Kidney (tissue), 22 donors: ENCODE measurements at regions of chr17 and their contacts with region 1.

Region 1: DNA sequence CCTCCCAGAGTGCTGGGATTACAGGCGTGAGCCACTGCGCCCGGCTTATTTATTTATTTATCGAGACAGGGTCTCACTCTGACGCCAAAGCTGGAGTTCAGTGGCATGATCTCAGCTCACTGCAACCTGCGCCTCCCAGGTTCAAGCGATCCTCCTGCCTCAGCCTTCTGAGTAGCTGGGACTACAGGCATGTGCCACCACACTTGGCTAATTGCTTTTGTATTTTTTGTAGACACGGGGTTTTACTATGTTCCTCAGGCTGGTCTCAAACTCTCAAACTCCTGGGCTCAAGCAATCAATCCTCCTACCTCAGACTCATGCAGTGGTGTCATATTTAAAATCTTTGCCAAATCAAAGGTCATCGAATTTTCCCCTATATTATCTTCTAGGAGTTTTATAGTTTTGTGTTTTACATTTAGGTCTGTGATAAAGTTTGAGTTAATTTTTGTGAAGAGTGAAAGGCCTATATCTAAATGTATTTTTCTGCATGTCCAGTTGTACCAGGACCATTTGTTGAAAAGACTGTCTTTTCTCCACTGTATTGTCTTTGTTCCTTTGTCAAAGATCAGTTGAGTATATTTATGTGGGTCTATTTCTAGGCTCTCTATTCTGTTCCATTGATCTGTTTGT is 47.1 kb downstream of the NACA2 start:
- DNase-seq: no peak
- H3K4me3 ChIP-seq: no peak overlapping the region
- H3K27ac ChIP-seq: no peak overlapping the region
- H3K4me1 ChIP-seq: no peaks in the 10 kb centered on the region
- H3K27me3 ChIP-seq: no peaks in the 10 kb centered on the region
- CTCF ChIP-seq: no peak

Region 2: GRCh38 chr17:61426013-61426730 is 117.7 kb before region 1 on chr17:
- intact Hi-C with region 1: loop called (anchors 10 kb)
- DNase-seq: no peak
- H3K4me3 ChIP-seq: no peak overlapping the region
- H3K27ac ChIP-seq: no peak overlapping the region
- H3K4me1 ChIP-seq: no peaks in the 10 kb centered on the region
- H3K27me3 ChIP-seq: peaks cover 2% of the 10 kb centered on the region
- CTCF ChIP-seq: no peak